Mammary epithelial cell (primary cell): ENCODE measurements at regions of chr5 and their contacts with region 1.

Region 1: GRCh38 chr5:142684508-142685041 is 1.3 kb downstream of the FGF1 start:
- DNase-seq: peak; percentile 44
- H3K4me3 ChIP-seq: peak overlapping the region; percentile 21 to 43 (median 40)
- H3K27ac ChIP-seq: peak overlapping the region; percentile 77
- H3K4me1 ChIP-seq: peaks cover 66% of the 10 kb centered on the region
- H3K27me3 ChIP-seq: no peaks in the 10 kb centered on the region
- CTCF ChIP-seq: no peak

Region 2: DNA sequence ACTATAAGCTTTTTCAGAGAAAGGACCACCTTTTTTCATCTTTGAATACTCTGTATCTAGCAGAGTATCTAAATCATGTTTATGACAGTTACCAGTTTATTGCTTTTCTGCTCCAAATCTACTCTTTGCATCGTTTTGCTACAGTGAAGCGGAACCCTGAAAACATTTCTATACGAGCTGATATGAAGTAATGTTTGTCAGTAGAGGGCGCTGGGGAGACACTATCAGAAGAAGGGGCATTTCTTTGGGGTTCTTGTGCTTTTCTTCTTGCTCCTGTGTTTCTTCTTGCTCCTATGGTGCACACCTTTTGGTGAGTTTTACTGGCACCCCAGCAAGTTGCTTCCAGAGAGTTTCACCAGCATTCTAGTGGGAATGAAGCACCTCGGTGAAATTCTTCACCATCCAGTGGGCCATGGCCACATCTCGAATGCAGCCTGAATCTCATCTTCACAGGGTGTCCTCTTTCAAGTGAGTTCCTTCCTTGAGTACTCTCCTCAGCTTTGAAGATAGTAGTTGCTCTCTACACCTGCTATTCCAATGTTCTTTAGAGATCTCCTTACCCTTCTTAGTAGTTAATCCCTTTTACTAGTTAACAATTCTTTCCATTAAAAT is 97.1 kb before region 1 on chr5:
- CTCF ChIA-PET with region 1: interaction called, 20 read pairs
- dilution Hi-C with region 1: no loop called
- in situ Hi-C with region 1: no loop called
- intact Hi-C with region 1: no loop called
- DNase-seq: peak; percentile 23
- H3K4me3 ChIP-seq: no peak overlapping the region
- H3K27ac ChIP-seq: no peak overlapping the region
- H3K4me1 ChIP-seq: no peaks in the 10 kb centered on the region
- H3K27me3 ChIP-seq: no peaks in the 10 kb centered on the region
- CTCF ChIP-seq: peak; percentile 65 to 68

Region 3: GRCh38 chr5:143037071-143037470 is 352.5 kb after region 1 on chr5:
- CTCF ChIA-PET with region 1: no interaction called
- dilution Hi-C with region 1: no loop called
- in situ Hi-C with region 1: no loop called
- intact Hi-C with region 1: no loop called
- DNase-seq: peak; percentile 57
- H3K4me3 ChIP-seq: no peak overlapping the region
- H3K27ac ChIP-seq: no peak overlapping the region
- H3K4me1 ChIP-seq: peaks cover 16% of the 10 kb centered on the region
- H3K27me3 ChIP-seq: no peaks in the 10 kb centered on the region
- CTCF ChIP-seq: no peak

Region 4: DNA sequence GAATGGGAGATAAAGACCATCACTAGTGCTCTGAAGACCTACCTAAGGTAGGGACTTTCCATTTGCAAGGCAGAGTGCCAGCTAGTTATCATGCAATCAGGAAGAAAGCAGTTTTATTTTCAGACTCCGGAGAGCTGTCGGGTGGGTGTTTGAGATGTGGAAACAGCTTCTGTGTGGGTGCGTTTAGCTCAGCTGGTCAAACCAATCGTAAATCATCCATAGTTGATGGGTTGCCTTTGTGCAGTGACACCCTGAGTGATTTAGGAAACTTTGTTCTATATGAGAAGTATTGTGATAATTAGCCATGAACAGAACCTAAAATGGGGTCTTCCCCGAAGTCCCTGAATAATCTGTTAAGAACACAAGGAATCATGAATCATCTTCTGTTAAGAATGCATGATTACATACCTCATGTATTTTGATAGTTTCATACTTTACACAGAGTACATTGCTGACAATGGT is 369.9 kb after region 1 on chr5:
- CTCF ChIA-PET with region 1: no interaction called
- dilution Hi-C with region 1: no loop called
- in situ Hi-C with region 1: no loop called
- intact Hi-C with region 1: no loop called
- DNase-seq: no peak
- H3K4me3 ChIP-seq: no peak overlapping the region
- H3K27ac ChIP-seq: no peak overlapping the region
- H3K4me1 ChIP-seq: peaks cover 14% of the 10 kb centered on the region
- H3K27me3 ChIP-seq: no peaks in the 10 kb centered on the region
- CTCF ChIP-seq: no peak